Activated B cell treated with CpG ODN at 0.5 μM for 24 hours (primary cell): ENCODE measurements at regions of chr6 and their contacts with region 1.

Region 1: GRCh38 chr6:97059473-97059872 is 134.9 kb downstream of the KLHL32 start:
- DNase-seq: no peak
- ATAC-seq: no peak
- H3K4me3 Mint-ChIP-seq: no peak overlapping the region
- H3K27ac Mint-ChIP-seq: no peak overlapping the region
- H3K4me1 Mint-ChIP-seq: no peaks in the 10 kb centered on the region
- H3K27me3 Mint-ChIP-seq: peaks cover 3% of the 10 kb centered on the region
- CTCF ChIP-seq: no peak

Region 2: DNA sequence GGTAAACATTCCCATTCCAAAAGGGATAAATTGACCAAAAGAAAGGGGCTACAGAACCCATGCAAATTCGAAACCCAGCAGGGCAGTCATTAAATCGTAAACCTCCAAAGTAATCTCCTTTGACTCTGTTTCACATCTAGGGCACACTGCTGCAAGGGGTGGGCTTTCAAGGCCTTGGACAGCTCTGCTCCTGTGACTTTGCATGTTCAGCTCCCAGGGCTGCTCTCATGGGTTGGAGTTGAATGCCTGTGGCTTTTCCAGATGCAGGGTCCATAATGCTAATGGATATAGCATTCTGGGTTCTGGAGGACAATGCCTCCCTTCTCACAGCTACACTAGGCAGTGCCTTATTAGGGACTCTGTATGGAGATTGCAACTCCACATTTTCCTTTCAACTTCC is 1694.0 kb before region 1 on chr6:
- CTCF ChIA-PET with region 1: no interaction called
- POLR2A ChIA-PET with region 1: no interaction called
- intact Hi-C with region 1: loop called (anchors 5 kb)
- DNase-seq: no peak
- ATAC-seq: no peak
- H3K4me3 Mint-ChIP-seq: no peak overlapping the region
- H3K27ac Mint-ChIP-seq: no peak overlapping the region
- H3K4me1 Mint-ChIP-seq: no peaks in the 10 kb centered on the region
- H3K27me3 Mint-ChIP-seq: no peaks in the 10 kb centered on the region
- CTCF ChIP-seq: no peak

Region 3: GRCh38 chr6:95431637-95432228 is 1627.7 kb before region 1 on chr6:
- CTCF ChIA-PET with region 1: no interaction called
- POLR2A ChIA-PET with region 1: no interaction called
- intact Hi-C with region 1: loop called (anchors 1 kb)
- DNase-seq: no peak
- ATAC-seq: no peak
- H3K4me3 Mint-ChIP-seq: no peak overlapping the region
- H3K27ac Mint-ChIP-seq: no peak overlapping the region
- H3K4me1 Mint-ChIP-seq: no peaks in the 10 kb centered on the region
- H3K27me3 Mint-ChIP-seq: no peaks in the 10 kb centered on the region
- CTCF ChIP-seq: no peak

Region 4: DNA sequence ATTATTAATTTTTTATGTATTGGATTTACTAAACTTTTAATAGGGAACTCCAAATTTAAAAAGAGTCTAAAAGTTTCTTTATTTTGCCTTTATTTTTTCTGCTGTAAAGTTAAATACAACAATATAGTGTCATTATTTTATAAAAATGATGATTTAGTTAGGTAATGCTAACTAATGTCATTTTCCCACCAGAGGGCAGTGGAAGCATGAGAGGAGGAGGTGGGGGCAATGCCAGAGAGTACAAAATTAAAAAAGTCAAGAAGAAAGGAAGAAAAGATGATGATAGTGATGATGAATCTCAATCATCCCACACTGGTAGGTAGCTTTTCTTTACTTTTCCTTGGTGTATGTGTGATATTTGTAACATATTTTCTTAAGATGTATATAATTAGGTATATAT is 516.8 kb before region 1 on chr6:
- CTCF ChIA-PET with region 1: interaction called, 6 read pairs
- POLR2A ChIA-PET with region 1: no interaction called
- intact Hi-C with region 1: loop called (anchors 1 kb)
- DNase-seq: no peak
- ATAC-seq: no peak
- H3K4me3 Mint-ChIP-seq: no peak overlapping the region
- H3K27ac Mint-ChIP-seq: no peak overlapping the region
- H3K4me1 Mint-ChIP-seq: no peaks in the 10 kb centered on the region
- H3K27me3 Mint-ChIP-seq: no peaks in the 10 kb centered on the region
- CTCF ChIP-seq: no peak

Region 5: GRCh38 chr6:96626759-96627364 is 432.6 kb before region 1 on chr6:
- CTCF ChIA-PET with region 1: interaction called, 46 read pairs
- POLR2A ChIA-PET with region 1: no interaction called
- intact Hi-C with region 1: loop called (anchors 1 kb)
- DNase-seq: no peak
- ATAC-seq: peak; percentile 57
- H3K4me3 Mint-ChIP-seq: no peak overlapping the region
- H3K27ac Mint-ChIP-seq: no peak overlapping the region
- H3K4me1 Mint-ChIP-seq: peaks cover 6% of the 10 kb centered on the region
- H3K27me3 Mint-ChIP-seq: peaks cover 4% of the 10 kb centered on the region
- CTCF ChIP-seq: no peak